MCF 10A (cell line): ENCODE measurements at regions of chr11 and their contacts with region 1.

Region 1: DNA sequence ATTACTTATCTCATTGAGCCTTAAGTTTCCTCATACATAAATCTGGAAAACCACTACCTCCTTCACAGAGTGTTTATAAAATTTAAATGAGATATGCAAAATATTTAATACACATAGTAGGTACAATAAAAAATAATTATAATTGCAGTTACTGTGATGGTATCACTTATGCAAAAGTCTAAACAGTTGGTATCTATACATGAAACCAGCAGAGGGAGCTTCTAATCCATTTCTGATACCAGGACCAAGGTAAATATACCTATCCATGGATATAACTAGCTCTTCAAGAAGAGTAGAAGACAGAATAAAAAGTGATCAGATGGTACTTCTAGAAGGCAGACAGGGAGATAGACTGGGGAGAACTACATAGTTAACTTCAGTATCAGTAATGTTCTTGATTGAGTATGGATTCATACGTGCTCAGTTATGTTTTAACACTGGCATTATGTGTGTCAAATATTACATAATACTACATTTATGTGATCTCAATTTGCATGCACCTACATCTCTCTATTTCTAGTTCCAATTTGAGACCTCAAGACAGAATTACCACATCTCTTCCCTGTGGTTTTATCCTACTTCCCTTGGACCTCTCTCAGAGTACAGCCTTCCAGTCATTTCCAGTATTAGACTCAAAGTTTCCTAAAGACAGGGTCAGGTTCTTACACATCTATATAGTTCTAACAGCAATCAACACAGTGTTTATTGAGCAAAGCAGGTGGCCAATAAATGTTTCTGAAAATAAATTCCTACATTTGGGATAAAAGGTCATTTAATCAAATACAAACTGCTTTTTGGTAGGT is 13.7 kb upstream of the TSG101 start:
- DNase-seq: peak; percentile 35
- H3K4me3 Mint-ChIP-seq: no peak overlapping the region
- H3K27ac Mint-ChIP-seq: no peak overlapping the region
- H3K4me1 Mint-ChIP-seq: no peaks in the 10 kb centered on the region
- H3K27me3 Mint-ChIP-seq: no peaks in the 10 kb centered on the region
- CTCF ChIP-seq: peak; percentile 46

Region 2: DNA sequence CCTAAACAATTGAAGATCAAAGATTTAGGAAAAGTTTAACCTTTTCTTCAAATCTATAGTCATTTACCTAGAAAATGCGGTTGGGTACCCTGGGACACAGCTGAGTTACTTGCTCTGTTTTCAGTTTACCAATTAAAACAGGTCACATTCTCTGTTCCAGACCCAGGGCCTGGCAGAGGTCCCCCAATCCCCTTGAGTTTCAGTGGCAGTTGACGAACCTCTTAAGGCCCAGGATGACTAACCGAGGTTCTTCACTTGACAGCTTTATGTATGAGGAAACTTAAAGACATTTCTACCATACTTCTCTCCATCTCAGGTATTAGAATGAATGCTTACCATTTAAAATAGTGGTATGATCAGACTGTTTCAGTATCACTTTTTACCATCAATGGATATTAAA is 68.4 kb before region 1 on chr11:
- CTCF ChIA-PET with region 1: no interaction called
- POLR2A ChIA-PET with region 1: no interaction called
- intact Hi-C with region 1: no loop called
- DNase-seq: no peak
- H3K4me3 Mint-ChIP-seq: no peak overlapping the region
- H3K27ac Mint-ChIP-seq: no peak overlapping the region
- H3K4me1 Mint-ChIP-seq: no peaks in the 10 kb centered on the region
- H3K27me3 Mint-ChIP-seq: no peaks in the 10 kb centered on the region
- CTCF ChIP-seq: no peak

Region 3: GRCh38 chr11:18650859-18651557 is 110.6 kb after region 1 on chr11:
- CTCF ChIA-PET with region 1: interaction called, 11 read pairs
- POLR2A ChIA-PET with region 1: no interaction called
- intact Hi-C with region 1: loop called (anchors 1 kb)
- DNase-seq: peak; percentile 71
- H3K4me3 Mint-ChIP-seq: no peak overlapping the region
- H3K27ac Mint-ChIP-seq: no peak overlapping the region
- H3K4me1 Mint-ChIP-seq: no peaks in the 10 kb centered on the region
- H3K27me3 Mint-ChIP-seq: no peaks in the 10 kb centered on the region
- CTCF ChIP-seq: peak; percentile 40

Region 4: GRCh38 chr11:18757811-18758210 is 217.4 kb after region 1 on chr11:
- CTCF ChIA-PET with region 1: interaction called, 11 read pairs
- POLR2A ChIA-PET with region 1: no interaction called
- intact Hi-C with region 1: no loop called
- DNase-seq: no peak
- H3K4me3 Mint-ChIP-seq: no peak overlapping the region
- H3K27ac Mint-ChIP-seq: no peak overlapping the region
- H3K4me1 Mint-ChIP-seq: no peaks in the 10 kb centered on the region
- H3K27me3 Mint-ChIP-seq: peaks cover 24% of the 10 kb centered on the region
- CTCF ChIP-seq: no peak

Region 5: DNA sequence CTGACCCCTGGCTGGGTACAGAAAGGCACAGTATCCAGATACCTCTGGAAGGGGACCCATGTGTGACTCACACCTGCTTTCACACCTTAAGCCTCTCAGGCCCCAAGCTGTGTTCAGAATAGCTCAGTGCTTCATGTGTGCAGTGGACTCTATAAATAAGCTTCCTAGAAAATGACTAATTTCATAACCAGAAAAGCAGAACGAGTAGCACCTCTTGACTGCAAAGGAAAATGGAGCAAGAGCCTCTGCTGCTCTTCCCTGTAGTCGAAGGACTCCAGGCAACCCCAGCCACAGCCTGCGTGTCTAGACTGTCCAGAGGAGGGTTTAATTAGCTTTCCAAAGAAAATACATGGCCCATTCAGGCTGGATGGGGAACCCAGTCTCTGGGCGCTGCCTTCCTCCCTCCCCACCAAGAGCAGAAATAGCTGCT is 228.1 kb after region 1 on chr11:
- CTCF ChIA-PET with region 1: interaction called, 10 read pairs
- POLR2A ChIA-PET with region 1: no interaction called
- intact Hi-C with region 1: loop called (anchors 2 kb)
- DNase-seq: no peak
- H3K4me3 Mint-ChIP-seq: no peak overlapping the region
- H3K27ac Mint-ChIP-seq: no peak overlapping the region
- H3K4me1 Mint-ChIP-seq: peaks cover 13% of the 10 kb centered on the region
- H3K27me3 Mint-ChIP-seq: peaks cover 28% of the 10 kb centered on the region
- CTCF ChIP-seq: no peak